ENCODE measurements at regions of chr1 and their contacts with region 1.

Region 1: GRCh38 chr1:180178511-180179161 is 24.0 kb downstream of the QSOX1 start:
- DNase-seq: peak; percentile 67
- H3K4me3 ChIP-seq: no peak overlapping the region
- H3K27ac ChIP-seq: no peak overlapping the region
- H3K4me1 ChIP-seq: peaks cover 11% of the 10 kb centered on the region
- H3K27me3 ChIP-seq: no peaks in the 10 kb centered on the region
- CTCF ChIP-seq: peak; percentile 76 to 94 (median 77)
- POLR2A ChIP-seq: no peak

Region 2: GRCh38 chr1:180116964-180117763 is 61.5 kb before region 1 on chr1:
- intact Hi-C with region 1: loop called (anchors 10 kb)
- DNase-seq: peak; percentile 91
- H3K4me3 ChIP-seq: no peak overlapping the region
- H3K27ac ChIP-seq: peak overlapping the region; percentile 2 to 74
- H3K4me1 ChIP-seq: peaks cover 34% of the 10 kb centered on the region
- H3K27me3 ChIP-seq: no peaks in the 10 kb centered on the region
- CTCF ChIP-seq: no peak
- POLR2A ChIP-seq: no peak

Measured in testis (tissue), 5 donors.